Right lobe of liver (tissue), 6 donors: ENCODE measurements at regions of chr1 and their contacts with region 1.

Region 1: GRCh38 chr1:229620876-229621275 is 5.0 kb downstream of the TAF5L start:
- DNase-seq: peak in 1 of 3 donors; percentile 77
- ATAC-seq: peak; percentile 70 to 83 (median 76)
- H3K4me3 ChIP-seq: no peak overlapping the region
- H3K27ac ChIP-seq: peak overlapping the region in 1 of 3 donors; percentile 33
- H3K4me1 ChIP-seq: peaks cover 0 to 22% (median 10%) of the 10 kb centered on the region in 4 donors
- H3K27me3 ChIP-seq: no peaks in the 10 kb centered on the region
- CTCF ChIP-seq: no peak
- POLR2A ChIP-seq: no peak

Region 2: DNA sequence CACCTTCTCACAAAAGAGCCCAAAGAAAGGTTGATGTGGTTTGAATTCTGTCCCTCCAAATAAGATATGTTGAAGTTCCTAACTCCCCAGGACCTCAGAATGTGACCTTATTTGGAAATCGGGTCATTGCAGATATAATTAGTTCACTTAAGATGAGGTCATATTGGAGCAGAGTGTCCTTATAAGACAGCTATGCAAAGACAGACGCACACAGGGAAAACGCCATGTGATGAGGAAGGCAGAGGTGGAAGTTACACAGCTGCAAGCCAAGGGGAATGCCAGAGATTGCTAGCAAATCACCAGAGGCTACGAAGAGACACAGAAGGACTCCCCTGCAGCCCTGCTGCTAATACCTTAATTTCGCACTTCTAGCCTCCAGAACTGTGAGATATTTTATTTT is 57.2 kb before region 1 on chr1:
- intact Hi-C with region 1: loop called in 1 of 2 experiments (anchors 5 kb)
- DNase-seq: no peak
- ATAC-seq: no peak
- H3K4me3 ChIP-seq: no peak overlapping the region
- H3K27ac ChIP-seq: no peak overlapping the region
- H3K4me1 ChIP-seq: peaks cover 0 to 7% (median 0%) of the 10 kb centered on the region in 4 donors
- H3K27me3 ChIP-seq: no peaks in the 10 kb centered on the region
- CTCF ChIP-seq: no peak
- POLR2A ChIP-seq: no peak

Region 3: GRCh38 chr1:229815076-229815475 is 194.2 kb after region 1 on chr1:
- intact Hi-C with region 1: no loop called
- DNase-seq: no peak
- ATAC-seq: no peak
- H3K4me3 ChIP-seq: no peak overlapping the region
- H3K27ac ChIP-seq: no peak overlapping the region
- H3K4me1 ChIP-seq: no peaks in the 10 kb centered on the region
- H3K27me3 ChIP-seq: no peaks in the 10 kb centered on the region
- CTCF ChIP-seq: no peak
- POLR2A ChIP-seq: no peak

Region 4: GRCh38 chr1:229979993-229980392 is 359.1 kb after region 1 on chr1:
- intact Hi-C with region 1: no loop called
- DNase-seq: no peak
- ATAC-seq: no peak
- H3K4me3 ChIP-seq: no peak overlapping the region
- H3K27ac ChIP-seq: no peak overlapping the region
- H3K4me1 ChIP-seq: peaks cover 0 to 4% (median 2%) of the 10 kb centered on the region in 4 donors
- H3K27me3 ChIP-seq: no peaks in the 10 kb centered on the region
- CTCF ChIP-seq: no peak
- POLR2A ChIP-seq: no peak